ENCODE measurements at regions of chr2 and their contacts with region 1.

Region 1: DNA sequence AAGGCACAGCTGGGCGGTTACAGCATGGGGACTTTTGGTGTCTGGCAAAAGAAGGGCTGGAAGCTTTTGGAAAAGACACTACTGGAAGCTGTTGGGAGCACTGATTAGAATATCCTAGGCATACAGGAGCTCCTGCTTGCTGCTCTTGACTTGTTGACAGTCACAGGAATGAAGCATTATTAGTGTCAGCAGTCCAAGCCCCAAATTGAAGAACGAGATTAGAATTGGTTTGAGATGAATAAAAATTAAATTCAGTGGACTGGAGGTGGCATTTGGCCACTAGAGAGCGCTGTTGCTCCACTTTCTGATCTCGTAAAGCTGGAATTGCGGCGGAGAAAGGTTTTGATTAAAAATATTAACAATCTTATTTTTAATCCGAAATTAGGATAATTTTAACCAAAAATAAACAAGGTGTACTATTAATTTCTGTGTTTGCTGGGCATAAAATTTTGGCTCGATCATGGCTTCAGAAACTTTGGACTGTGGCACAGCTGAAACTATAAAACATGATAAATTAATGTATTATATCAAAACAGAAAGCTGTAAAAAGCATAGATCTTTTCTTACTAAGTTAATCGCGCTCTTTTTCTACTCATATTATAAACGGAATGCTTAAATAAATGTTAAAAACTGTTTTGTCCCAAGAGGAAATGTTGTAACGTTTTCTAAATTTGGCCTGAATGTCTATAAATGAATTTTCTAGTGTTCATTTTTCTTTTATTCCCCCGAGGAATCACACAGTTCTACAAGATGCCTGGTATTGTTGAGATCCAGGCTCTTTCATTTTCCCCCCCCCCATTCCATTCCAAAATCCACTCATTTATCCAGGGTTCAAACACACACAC is 2.4 kb upstream of the HOXD8 start:
- DNase-seq: peak in 8 of 9 donors; percentile 26 to 68 (median 54)
- ATAC-seq: peak; percentile 51
- H3K4me3 ChIP-seq: no peak overlapping the region
- H3K4me3 Mint-ChIP-seq: peak overlapping the region in 4 of 10 donors; percentile 17 to 67 (median 38)
- H3K27ac ChIP-seq: no peak overlapping the region
- H3K27ac Mint-ChIP-seq: peak overlapping the region in 3 of 9 donors; percentile 8 to 63 (median 62)
- H3K4me1 ChIP-seq: peaks cover 3 to 20% of the 10 kb centered on the region in 2 donors
- H3K4me1 Mint-ChIP-seq: peaks cover 17 to 51% (median 41%) of the 10 kb centered on the region in 7 donors
- H3K27me3 ChIP-seq: peaks cover 33 to 74% of the 10 kb centered on the region in 2 donors
- H3K27me3 Mint-ChIP-seq: peaks cover 71 to 80% (median 76%) of the 10 kb centered on the region in 5 donors

Region 2: DNA sequence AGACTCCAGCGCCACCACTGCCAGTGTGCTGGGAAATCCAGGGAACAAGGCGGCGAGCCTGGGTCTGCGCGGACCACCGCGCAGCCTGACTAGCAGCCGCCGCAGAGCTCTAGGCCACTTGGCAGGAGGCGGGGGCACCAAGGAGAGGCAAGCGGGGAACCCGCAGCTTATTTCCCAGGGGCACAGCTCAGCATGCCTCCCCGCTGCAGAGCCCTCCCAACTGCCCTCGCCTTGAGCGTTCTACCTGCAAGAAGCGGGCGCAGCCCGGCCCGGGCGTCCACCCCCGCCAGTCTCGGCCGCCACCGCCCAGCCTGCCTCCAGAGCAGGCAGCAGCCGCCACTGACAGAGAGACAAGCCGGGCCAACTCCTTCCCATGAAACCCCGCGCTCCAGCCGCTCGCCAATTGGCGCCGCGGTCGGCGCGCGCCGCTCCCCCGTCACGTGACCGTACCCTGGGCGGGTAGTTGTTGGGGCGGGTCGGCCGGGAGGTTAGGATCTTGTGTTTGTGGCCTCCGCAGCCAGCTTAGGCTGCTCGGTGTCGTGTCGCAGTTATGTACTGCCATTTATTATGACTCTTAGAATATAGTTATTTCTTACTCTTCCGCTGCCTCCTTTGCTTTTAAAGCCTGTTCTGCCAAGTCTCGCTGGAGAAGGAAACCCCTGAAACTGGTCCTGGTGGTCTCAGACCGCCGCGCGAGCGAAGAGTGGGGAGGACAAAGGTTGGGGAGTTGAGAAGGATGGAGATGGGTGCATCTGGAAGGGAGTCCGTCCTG is 125.0 kb before region 1 on chr2 and contains the start of gene LNPK:
- CTCF ChIA-PET with region 1: no interaction called
- POLR2A ChIA-PET with region 1: no interaction called
- intact Hi-C with region 1: loop called in 1 of 2 experiments (anchors 5 kb)
- DNase-seq: peak; percentile 82 to 93 (median 91)
- ATAC-seq: peak; percentile 94
- H3K4me3 ChIP-seq: peak within 1 kb of the TSS; percentile 84
- H3K4me3 Mint-ChIP-seq: peak within 1 kb of the TSS; percentile 89 to 96 (median 92)
- H3K27ac ChIP-seq: peak within 1 kb of the TSS; percentile 75
- H3K27ac Mint-ChIP-seq: peak within 1 kb of the TSS; percentile 79 to 99 (median 92)
- H3K4me1 ChIP-seq: peaks cover 11 to 16% of the 10 kb centered on the region in 2 donors
- H3K4me1 Mint-ChIP-seq: peaks cover 18 to 35% (median 31%) of the 10 kb centered on the region in 7 donors
- H3K27me3 ChIP-seq: no peaks in the 10 kb centered on the region
- H3K27me3 Mint-ChIP-seq: peaks cover 0 to 9% (median 0%) of the 10 kb centered on the region in 5 donors
- total RNA-seq, gene LNPK: 19.4 to 36.8 (median 24.0) TPM

Region 3: DNA sequence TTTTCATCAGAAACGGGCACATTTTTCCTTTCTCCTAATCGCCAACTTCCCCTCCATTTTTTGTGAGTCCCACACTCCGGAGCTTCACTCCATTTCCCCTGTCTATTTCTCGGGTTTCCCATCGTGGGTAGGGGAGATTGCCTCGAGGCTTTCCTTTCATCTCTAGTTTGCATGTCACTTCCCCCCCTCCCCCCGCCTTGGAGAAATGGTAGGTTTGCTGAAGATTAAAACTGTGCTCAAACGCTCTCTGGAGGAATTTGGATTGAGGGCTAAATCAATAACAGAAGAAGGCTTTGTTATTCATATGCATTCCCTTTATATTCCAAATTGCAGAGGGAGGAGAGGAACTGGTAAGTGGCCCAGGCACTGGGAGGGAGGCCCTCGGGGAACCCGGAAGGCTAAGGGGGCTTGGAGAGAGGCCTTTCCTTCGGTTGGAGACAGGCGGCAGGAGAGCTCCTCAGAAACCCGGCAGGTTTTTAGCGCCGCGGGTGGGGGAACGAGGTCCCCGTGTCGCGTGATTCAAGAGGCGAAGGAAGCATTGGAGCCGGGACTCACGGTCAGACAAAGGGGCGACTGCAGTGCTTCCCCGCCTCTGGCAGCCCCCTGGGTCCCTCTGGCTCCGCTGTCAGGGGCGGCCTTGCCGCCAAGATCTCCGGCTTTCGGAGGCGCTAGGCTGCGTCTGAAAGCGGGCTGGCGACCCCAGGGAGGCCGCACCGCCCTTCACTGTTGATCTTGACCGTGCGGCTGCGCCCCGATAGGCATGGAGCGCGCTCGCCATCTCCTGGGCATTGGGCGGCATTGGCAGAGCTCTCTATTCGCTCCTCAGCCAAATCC is 29.9 kb before region 1 on chr2:
- CTCF ChIA-PET with region 1: no interaction called
- POLR2A ChIA-PET with region 1: no interaction called
- intact Hi-C with region 1: loop called in 1 of 2 experiments (anchors 5 kb)
- DNase-seq: peak in 4 of 9 donors; percentile 47 to 63 (median 59)
- ATAC-seq: peak; percentile 81
- H3K4me3 ChIP-seq: peak overlapping the region; percentile 35
- H3K4me3 Mint-ChIP-seq: peak overlapping the region; percentile 72 to 86 (median 76)
- H3K27ac ChIP-seq: no peak overlapping the region
- H3K27ac Mint-ChIP-seq: peak overlapping the region in 1 of 9 donors; percentile 30
- H3K4me1 ChIP-seq: peaks cover 14 to 18% of the 10 kb centered on the region in 2 donors
- H3K4me1 Mint-ChIP-seq: peaks cover 17 to 35% (median 29%) of the 10 kb centered on the region in 7 donors
- H3K27me3 ChIP-seq: peaks cover 38 to 60% of the 10 kb centered on the region in 2 donors
- H3K27me3 Mint-ChIP-seq: peaks cover 78 to 88% (median 81%) of the 10 kb centered on the region in 5 donors

Region 4: DNA sequence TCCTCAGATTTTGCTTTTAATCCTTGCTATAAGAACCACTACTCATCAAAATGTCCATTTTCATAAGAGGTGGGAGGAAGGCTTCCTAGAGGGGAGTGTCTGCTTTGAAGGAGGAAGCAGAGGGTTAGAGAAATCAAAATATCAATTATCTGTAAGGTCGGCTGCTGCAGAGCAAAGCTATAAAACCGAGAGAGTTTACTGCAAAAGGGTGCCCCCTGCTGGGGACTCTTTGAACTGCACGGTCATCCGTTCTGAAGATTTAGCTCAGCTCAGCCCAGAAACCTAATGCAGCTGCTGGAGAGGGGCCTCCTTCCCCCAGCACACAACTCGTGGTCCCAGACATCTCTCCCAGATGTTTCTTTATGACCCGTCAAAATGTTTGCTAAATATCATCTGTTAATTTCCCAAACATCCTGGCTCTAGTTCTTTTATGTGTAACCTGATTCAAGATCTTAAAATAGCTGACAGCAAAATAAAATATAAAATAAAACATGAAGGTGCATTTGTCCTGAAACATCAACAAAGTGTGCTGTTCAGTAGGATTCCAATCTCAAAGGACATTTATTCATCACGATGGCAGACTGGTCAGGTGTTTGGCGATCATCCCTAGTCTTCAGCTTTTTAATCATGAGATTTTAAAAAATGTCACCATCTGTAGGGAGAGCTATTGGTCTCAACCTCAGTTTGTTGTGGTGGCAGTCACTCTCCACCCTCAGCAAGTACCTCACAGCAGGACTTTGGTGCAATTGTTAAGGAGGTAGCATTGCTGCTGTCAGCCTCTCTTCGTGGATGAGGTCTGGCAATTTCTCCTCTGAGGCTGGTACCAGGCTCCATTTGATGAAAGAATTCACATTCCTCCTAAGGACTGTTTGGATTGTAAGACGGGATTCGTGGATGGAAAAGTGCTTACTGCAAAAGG is 328.0 kb after region 1 on chr2:
- CTCF ChIA-PET with region 1: interaction called, 65 read pairs
- POLR2A ChIA-PET with region 1: interaction called, 3 read pairs
- intact Hi-C with region 1: loop called (anchors 1 kb)
- DNase-seq: peak; percentile 36 to 80 (median 65)
- ATAC-seq: peak; percentile 84
- H3K4me3 ChIP-seq: no peak overlapping the region
- H3K4me3 Mint-ChIP-seq: no peak overlapping the region
- H3K27ac ChIP-seq: no peak overlapping the region
- H3K27ac Mint-ChIP-seq: no peak overlapping the region
- H3K4me1 ChIP-seq: no peaks in the 10 kb centered on the region
- H3K4me1 Mint-ChIP-seq: no peaks in the 10 kb centered on the region
- H3K27me3 ChIP-seq: no peaks in the 10 kb centered on the region
- H3K27me3 Mint-ChIP-seq: peaks cover 42 to 56% (median 46%) of the 10 kb centered on the region in 5 donors

Region 5: DNA sequence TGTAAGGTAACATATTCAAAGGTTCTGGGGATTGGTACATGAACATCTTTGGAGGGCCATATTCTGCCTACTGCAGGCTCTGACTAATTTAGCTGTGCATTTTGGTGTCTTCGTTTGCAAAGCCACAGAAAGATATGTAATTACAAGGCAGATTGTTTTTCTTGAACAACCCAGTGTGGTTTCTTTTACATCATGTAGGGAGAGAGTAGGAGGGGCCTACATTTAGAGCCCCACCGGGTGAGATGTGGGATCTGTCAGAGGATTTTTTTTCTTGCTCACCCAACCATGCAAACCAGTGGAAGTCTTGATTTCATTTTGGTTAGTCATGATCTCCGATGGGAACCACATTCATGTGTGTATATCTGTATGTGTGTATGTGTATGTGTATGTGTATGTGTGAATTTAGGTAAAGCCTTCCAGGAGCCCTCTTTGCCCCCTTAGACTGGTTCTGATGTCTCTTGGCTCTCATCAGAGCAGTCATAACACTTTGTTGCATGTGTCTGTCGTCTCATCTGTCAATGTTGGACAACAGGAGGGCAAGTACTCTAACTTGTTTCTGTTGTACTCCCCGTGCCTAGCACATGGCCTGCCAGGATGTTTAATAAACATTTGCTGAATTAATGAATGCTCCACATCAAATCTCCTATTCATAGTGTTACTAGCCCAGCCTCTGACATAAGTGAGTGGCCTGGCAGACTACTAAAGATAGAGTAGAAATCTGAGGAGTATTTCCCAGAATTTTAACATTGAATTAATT is 382.0 kb after region 1 on chr2:
- CTCF ChIA-PET with region 1: no interaction called
- POLR2A ChIA-PET with region 1: no interaction called
- intact Hi-C with region 1: no loop called
- DNase-seq: no peak
- ATAC-seq: no peak
- H3K4me3 ChIP-seq: no peak overlapping the region
- H3K4me3 Mint-ChIP-seq: no peak overlapping the region
- H3K27ac ChIP-seq: no peak overlapping the region
- H3K27ac Mint-ChIP-seq: no peak overlapping the region
- H3K4me1 ChIP-seq: no peaks in the 10 kb centered on the region
- H3K4me1 Mint-ChIP-seq: no peaks in the 10 kb centered on the region
- H3K27me3 ChIP-seq: peaks cover 0 to 4% of the 10 kb centered on the region in 2 donors
- H3K27me3 Mint-ChIP-seq: peaks cover 4 to 15% (median 7%) of the 10 kb centered on the region in 5 donors

Region 6: GRCh38 chr2:176638167-176639015 is 511.2 kb after region 1 on chr2:
- CTCF ChIA-PET with region 1: interaction called, 3 read pairs
- POLR2A ChIA-PET with region 1: no interaction called
- intact Hi-C with region 1: loop called (anchors 1 to 2 kb)
- DNase-seq: peak in 8 of 9 donors; percentile 28 to 67 (median 50)
- ATAC-seq: peak; percentile 87
- H3K4me3 ChIP-seq: peak overlapping the region; percentile 45
- H3K4me3 Mint-ChIP-seq: peak overlapping the region in 9 of 10 donors; percentile 55 to 81 (median 70)
- H3K27ac ChIP-seq: no peak overlapping the region
- H3K27ac Mint-ChIP-seq: no peak overlapping the region
- H3K4me1 ChIP-seq: no peaks in the 10 kb centered on the region
- H3K4me1 Mint-ChIP-seq: peaks cover 0 to 10% (median 3%) of the 10 kb centered on the region in 7 donors
- H3K27me3 ChIP-seq: peaks cover 3 to 10% of the 10 kb centered on the region in 2 donors
- H3K27me3 Mint-ChIP-seq: peaks cover 53 to 78% (median 71%) of the 10 kb centered on the region in 5 donors

Region 7: DNA sequence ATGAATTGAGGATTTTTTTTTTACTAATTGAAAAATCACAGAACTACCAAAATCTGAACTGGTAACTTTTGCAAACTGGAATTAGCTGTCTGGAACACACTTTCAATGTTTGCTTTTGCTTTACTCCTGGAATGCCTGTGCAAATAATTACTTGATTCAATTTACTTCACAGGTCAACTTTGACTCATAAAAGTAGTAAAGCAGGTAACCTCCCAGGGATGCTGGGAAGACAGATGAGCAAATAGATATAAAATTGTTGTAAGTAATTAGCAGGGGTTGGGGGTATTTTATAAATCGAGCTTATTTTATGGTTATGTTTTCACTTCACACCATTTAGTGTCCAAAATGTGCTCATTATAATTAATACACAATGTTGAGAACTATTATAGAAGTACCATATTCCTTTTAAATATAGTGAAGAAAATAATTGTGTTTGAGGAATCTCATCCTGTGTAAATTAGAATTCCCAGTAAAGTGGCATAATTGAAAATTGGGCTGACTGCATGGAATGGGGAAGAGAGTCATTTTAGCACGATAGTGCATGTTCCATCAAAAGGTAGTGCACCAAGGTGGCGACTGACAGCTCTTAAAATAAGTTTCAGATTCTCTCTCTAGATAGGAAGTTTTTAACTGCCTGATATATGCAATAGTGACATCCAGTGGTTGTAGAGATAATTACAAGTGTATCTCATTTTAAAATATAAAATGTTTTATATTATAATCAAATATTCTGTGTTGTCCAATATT is 687.3 kb after region 1 on chr2:
- CTCF ChIA-PET with region 1: no interaction called
- POLR2A ChIA-PET with region 1: no interaction called
- intact Hi-C with region 1: loop called (anchors 1 to 2 kb)
- DNase-seq: peak in 5 of 9 donors; percentile 34 to 47 (median 44)
- ATAC-seq: peak; percentile 80
- H3K4me3 ChIP-seq: no peak overlapping the region
- H3K4me3 Mint-ChIP-seq: peak overlapping the region in 7 of 10 donors; percentile 7 to 62 (median 24)
- H3K27ac ChIP-seq: no peak overlapping the region
- H3K27ac Mint-ChIP-seq: no peak overlapping the region
- H3K4me1 ChIP-seq: peaks cover 3 to 7% of the 10 kb centered on the region in 2 donors
- H3K4me1 Mint-ChIP-seq: peaks cover 10 to 26% (median 19%) of the 10 kb centered on the region in 7 donors
- H3K27me3 ChIP-seq: no peaks in the 10 kb centered on the region
- H3K27me3 Mint-ChIP-seq: peaks cover 0 to 7% (median 0%) of the 10 kb centered on the region in 5 donors

Region 8: GRCh38 chr2:177763532-177764265 is 1636.5 kb after region 1 on chr2:
- CTCF ChIA-PET with region 1: no interaction called
- POLR2A ChIA-PET with region 1: no interaction called
- intact Hi-C with region 1: loop called in 1 of 2 experiments (anchors 10 kb)
- DNase-seq: peak; percentile 51 to 75 (median 68)
- ATAC-seq: peak; percentile 95
- H3K4me3 ChIP-seq: peak overlapping the region; percentile 20
- H3K4me3 Mint-ChIP-seq: peak overlapping the region in 8 of 10 donors; percentile 20 to 55 (median 30)
- H3K27ac ChIP-seq: no peak overlapping the region
- H3K27ac Mint-ChIP-seq: peak overlapping the region in 1 of 9 donors; percentile 42
- H3K4me1 ChIP-seq: peaks cover 0 to 4% of the 10 kb centered on the region in 2 donors
- H3K4me1 Mint-ChIP-seq: peaks cover 0 to 11% (median 6%) of the 10 kb centered on the region in 7 donors
- H3K27me3 ChIP-seq: no peaks in the 10 kb centered on the region
- H3K27me3 Mint-ChIP-seq: peaks cover 10 to 28% (median 24%) of the 10 kb centered on the region in 5 donors

Measured in naive thymus-derived CD4-positive, alpha-beta T cell (primary cell).